Natural killer cell (primary cell): ENCODE measurements at regions of chr10 and their contacts with region 1.

Region 1: GRCh38 chr10:127254276-127254675 is 57.9 kb upstream of the INSYN2A start:
- DNase-seq: peak; percentile 37 to 45
- ATAC-seq: peak; percentile 86 to 93 (median 87)
- H3K4me3 ChIP-seq: no peak overlapping the region
- H3K4me3 Mint-ChIP-seq: peak overlapping the region; percentile 83
- H3K27ac ChIP-seq: peak overlapping the region; percentile 56
- H3K27ac Mint-ChIP-seq: peak overlapping the region; percentile 89 to 92
- H3K4me1 ChIP-seq: peaks cover 36% of the 10 kb centered on the region
- H3K4me1 Mint-ChIP-seq: peaks cover 64 to 71% of the 10 kb centered on the region in 2 donors
- H3K27me3 ChIP-seq: no peaks in the 10 kb centered on the region
- H3K27me3 Mint-ChIP-seq: no peaks in the 10 kb centered on the region
- CTCF ChIP-seq: no peak

Region 2: DNA sequence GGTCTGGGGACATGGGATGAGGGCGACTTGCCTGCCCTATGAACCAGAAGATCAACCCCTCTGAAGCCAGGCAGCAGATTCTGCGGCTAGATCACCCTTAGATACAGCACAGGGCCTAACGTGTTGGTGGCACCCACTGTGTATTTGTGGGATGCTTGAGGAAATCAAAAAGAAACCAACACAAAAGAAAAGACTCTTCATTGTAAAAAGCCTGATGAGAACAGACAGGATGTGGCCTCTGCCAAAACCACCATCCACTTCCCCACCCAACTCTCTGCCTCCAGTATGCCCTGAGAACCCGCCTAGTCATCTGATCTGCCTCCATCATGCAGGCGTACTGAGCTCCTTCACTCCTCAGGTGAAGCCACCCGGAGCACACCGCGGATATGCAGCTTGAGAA is 39.4 kb after region 1 on chr10:
- intact Hi-C with region 1: loop called (anchors 1 kb)
- DNase-seq: peak; percentile 60 to 82
- ATAC-seq: peak; percentile 85 to 90 (median 86)
- H3K4me3 ChIP-seq: no peak overlapping the region
- H3K4me3 Mint-ChIP-seq: peak overlapping the region; percentile 68
- H3K27ac ChIP-seq: peak overlapping the region; percentile 64
- H3K27ac Mint-ChIP-seq: peak overlapping the region; percentile 65 to 81
- H3K4me1 ChIP-seq: peaks cover 55% of the 10 kb centered on the region
- H3K4me1 Mint-ChIP-seq: peaks cover 65 to 74% of the 10 kb centered on the region in 2 donors
- H3K27me3 ChIP-seq: peaks cover 5% of the 10 kb centered on the region
- H3K27me3 Mint-ChIP-seq: peaks cover 0 to 2% of the 10 kb centered on the region in 2 donors
- CTCF ChIP-seq: no peak